Calu3 (cell line): ENCODE measurements at regions of chr6 and their contacts with region 1.

Region 1: DNA sequence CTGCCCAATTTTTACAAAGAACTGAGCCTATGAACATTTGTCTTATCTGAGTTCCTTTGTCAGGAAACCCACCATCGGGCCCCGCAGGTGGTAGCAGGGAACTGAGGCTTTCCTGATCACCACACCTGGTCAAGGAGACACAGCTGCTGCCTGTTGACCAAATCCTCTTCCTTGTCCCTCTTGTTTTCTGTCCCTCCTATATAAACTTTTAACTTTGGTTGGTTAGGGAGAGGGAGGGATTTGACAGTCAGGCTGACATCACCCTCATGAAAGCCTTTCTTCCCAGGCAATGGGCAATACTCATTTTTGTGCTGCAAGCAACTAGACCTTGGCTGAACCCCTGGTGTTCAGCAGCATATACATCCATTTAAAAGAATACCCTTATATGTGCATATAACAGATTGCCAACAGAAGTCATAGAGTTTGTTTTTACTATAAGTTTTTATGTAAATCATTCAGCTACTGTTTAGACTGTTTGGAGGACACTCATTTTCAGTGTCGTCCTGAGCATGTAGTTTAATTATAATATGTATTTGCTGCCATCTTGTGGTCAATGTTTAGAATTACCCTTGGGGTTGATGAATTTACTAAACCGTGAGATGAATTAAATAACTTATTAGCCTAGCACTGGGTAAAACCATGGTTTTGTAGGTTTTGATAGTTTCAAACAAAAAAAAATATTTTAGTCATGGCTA is 17.0 kb downstream of the CRISP1 start:
- DNase-seq: no peak
- H3K4me3 Mint-ChIP-seq: no peak overlapping the region
- H3K27ac Mint-ChIP-seq: no peak overlapping the region
- H3K4me1 Mint-ChIP-seq: no peaks in the 10 kb centered on the region
- H3K27me3 Mint-ChIP-seq: no peaks in the 10 kb centered on the region
- CTCF ChIP-seq: peak; percentile 50

Region 2: DNA sequence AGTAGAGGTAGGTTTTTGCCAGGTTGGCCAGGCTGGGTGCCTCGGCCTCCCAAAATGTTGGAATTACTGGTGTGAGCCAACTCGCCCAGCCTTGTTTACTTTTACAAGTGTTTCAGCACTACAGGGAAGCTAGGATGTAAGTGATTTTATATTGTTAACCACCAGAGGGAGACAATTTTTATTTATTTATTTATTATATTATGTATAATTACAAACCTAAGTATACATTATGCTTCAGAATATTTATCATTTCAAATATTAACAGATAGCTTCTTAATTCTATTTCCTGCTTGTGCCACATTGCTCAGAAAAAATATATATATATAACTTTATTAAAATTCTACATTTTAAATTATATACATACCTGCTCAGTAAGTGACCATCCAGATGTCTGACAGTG is 396.1 kb before region 1 on chr6:
- CTCF ChIA-PET with region 1: no interaction called
- intact Hi-C with region 1: loop called (anchors 5 kb)
- DNase-seq: no peak
- H3K4me3 Mint-ChIP-seq: no peak overlapping the region
- H3K27ac Mint-ChIP-seq: no peak overlapping the region
- H3K4me1 Mint-ChIP-seq: no peaks in the 10 kb centered on the region
- H3K27me3 Mint-ChIP-seq: no peaks in the 10 kb centered on the region
- CTCF ChIP-seq: peak; percentile 29